AG04450 (cell line): ENCODE measurements at regions of chr3 and their contacts with region 1.

Region 1: GRCh38 chr3:132029182-132029902 is 5.5 kb downstream of the CPNE4 start:
- DNase-seq: peak; percentile 52
- H3K4me3 ChIP-seq: no peak overlapping the region
- H3K27ac ChIP-seq: no peak overlapping the region
- H3K27me3 ChIP-seq: peaks cover 13% of the 10 kb centered on the region
- CTCF ChIP-seq: peak; percentile 97

Region 2: DNA sequence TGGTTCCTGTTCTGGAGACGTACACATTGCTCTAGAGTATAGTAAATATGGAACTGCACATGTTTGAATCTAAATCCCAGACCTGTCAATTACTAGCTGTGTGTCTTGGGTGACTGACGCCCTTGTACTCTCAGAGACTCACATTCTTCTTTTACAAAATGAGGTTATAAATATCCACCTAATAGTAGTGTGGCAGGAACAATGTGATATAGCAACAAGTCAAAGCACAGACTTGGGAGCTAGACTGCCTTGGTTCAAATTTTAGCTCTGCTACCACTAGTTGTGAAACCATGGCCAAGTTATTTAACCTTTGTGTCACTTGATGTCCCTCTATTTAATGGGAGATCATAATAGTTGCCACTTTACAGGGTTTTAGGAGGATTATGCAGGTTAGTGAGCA is 240.2 kb before region 1 on chr3:
- CTCF ChIA-PET with region 1: interaction called, 264 read pairs
- POLR2A ChIA-PET with region 1: no interaction called
- DNase-seq: no peak
- H3K4me3 ChIP-seq: no peak overlapping the region
- H3K27ac ChIP-seq: no peak overlapping the region
- H3K27me3 ChIP-seq: no peaks in the 10 kb centered on the region
- CTCF ChIP-seq: no peak

Region 3: GRCh38 chr3:132006605-132007204 is 22.6 kb before region 1 on chr3:
- CTCF ChIA-PET with region 1: interaction called, 15 read pairs
- POLR2A ChIA-PET with region 1: no interaction called
- DNase-seq: no peak
- H3K4me3 ChIP-seq: no peak overlapping the region
- H3K27ac ChIP-seq: no peak overlapping the region
- H3K27me3 ChIP-seq: peaks cover 2% of the 10 kb centered on the region
- CTCF ChIP-seq: peak; percentile 62

Region 4: DNA sequence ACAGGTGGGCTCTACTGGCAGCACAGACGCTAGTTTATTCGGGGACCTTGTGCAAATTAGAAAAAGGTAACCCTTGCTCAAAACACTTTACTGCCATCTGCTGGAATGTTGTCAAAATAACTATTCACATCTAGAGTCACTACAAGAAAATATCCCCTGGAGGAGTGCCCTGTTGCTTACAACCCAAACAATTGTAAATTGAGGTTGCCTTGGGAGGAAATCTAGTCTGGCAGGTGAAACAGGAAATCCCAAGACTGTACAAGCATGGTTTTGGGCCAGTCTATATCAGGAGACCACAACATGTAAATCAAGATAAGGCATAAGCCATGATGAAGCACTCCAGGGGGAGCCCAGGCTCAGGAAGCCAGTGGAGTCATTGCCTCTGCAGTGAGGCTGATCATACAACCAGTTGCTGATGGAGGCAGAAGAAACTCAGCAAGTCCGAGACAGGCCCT is 151.0 kb after region 1 on chr3:
- CTCF ChIA-PET with region 1: interaction called, 337 read pairs
- POLR2A ChIA-PET with region 1: no interaction called
- DNase-seq: peak; percentile 20
- H3K4me3 ChIP-seq: no peak overlapping the region
- H3K27ac ChIP-seq: no peak overlapping the region
- H3K27me3 ChIP-seq: peaks cover 2% of the 10 kb centered on the region
- CTCF ChIP-seq: peak; percentile 66